MCF 10A (cell line): ENCODE measurements at regions of chr11 and their contacts with region 1.

Region 1: DNA sequence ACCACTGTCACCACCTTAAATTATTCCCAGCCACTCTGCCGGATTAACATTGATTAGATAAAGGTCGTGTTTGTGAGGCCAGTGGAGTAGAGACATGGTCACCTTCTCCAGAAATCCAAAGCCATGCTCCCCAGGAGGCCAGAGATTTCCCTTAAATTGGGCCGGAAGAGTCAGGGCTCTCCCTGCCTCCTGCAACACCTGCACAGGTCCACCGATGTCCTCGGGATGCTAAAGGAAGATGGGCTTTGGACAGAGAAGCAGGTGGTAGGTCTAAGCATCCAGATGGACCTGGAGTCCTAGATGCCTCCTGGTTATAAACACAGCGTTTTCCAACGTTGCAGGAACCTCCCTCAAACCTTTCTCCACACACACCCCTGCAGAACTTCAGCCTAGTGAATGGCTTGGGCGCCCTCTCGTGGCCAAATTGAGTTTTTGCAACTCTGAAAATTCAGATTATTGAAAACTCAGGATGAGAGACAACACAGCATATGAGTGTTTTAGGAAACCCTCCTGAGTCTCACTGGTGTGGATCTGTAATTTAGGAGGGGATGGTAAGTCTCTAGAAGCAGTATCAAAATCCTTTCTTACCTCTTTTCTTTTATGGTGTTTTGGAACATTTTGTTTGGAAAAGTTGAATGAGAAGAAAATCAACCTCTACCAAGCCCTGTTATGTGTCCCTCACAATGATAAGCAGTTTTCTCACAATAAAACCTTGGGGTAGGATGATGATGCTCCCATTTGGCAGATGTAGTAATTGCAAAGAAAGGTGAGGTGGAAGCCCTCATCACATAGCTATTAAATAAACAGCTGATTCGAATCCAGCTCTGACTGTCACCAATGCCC is 109.6 kb downstream of the RRAS2 start:
- DNase-seq: peak; percentile 75
- H3K4me3 Mint-ChIP-seq: no peak overlapping the region
- H3K27ac Mint-ChIP-seq: no peak overlapping the region
- H3K4me1 Mint-ChIP-seq: no peaks in the 10 kb centered on the region
- H3K27me3 Mint-ChIP-seq: peaks cover 69% of the 10 kb centered on the region
- CTCF ChIP-seq: peak; percentile 88

Region 2: GRCh38 chr11:13970986-13971385 is 278.4 kb before region 1 on chr11:
- CTCF ChIA-PET with region 1: interaction called, 8 read pairs
- POLR2A ChIA-PET with region 1: no interaction called
- intact Hi-C with region 1: loop called (anchors 1 kb)
- DNase-seq: peak; percentile 64
- H3K4me3 Mint-ChIP-seq: no peak overlapping the region
- H3K27ac Mint-ChIP-seq: no peak overlapping the region
- H3K4me1 Mint-ChIP-seq: no peaks in the 10 kb centered on the region
- H3K27me3 Mint-ChIP-seq: peaks cover 85% of the 10 kb centered on the region
- CTCF ChIP-seq: peak; percentile 50

Region 3: DNA sequence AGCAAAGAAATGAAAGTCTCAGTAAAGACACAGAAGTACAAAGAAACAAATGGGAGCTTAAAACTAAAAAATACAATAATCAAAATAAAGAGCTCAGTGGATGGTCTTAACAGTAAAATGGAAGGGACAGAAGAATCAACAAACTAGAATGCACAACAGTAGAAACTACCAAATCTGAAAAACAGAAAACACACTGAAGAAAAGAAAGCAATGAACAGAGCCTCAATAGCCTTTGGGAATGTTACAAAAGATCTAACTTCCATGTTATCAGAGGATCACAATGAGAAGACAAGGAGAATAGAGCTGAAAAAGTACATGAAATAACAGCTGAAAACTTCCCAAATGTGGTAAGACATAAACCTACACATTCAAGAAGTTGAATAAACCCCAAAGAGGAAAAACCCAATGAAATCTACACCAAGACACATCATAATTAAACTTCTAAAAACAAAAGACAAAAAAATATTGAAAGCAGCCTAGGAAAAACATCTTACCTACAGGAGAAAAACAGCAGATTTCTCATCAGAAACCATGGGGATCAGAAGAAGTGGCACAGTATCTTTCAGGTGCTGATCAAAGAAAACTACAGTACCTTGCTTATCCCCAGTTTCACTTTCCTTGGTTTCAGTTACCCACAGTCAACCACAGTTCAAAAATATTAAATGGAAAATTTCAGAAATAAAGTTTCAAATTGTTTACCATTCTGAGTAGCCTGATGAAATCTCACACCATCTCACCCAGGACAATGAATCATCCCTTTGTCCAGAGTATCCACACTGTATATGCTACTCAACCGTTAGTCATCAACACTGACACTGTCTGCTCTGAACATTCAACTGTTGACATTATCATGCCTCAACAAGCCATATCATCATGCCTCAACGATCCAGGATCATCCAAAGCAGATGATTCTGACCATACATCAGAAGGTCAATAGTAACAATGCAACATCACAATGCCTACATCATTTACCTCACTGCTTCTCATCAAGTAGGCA is 87.5 kb after region 1 on chr11:
- CTCF ChIA-PET with region 1: no interaction called
- POLR2A ChIA-PET with region 1: no interaction called
- intact Hi-C with region 1: no loop called
- DNase-seq: peak; percentile 97
- H3K4me3 Mint-ChIP-seq: peak overlapping the region; percentile 59
- H3K27ac Mint-ChIP-seq: peak overlapping the region; percentile 97
- H3K4me1 Mint-ChIP-seq: peaks cover 40% of the 10 kb centered on the region
- H3K27me3 Mint-ChIP-seq: no peaks in the 10 kb centered on the region
- CTCF ChIP-seq: no peak